ENCODE measurements at regions of chr6 and their contacts with region 1.

Region 1: DNA sequence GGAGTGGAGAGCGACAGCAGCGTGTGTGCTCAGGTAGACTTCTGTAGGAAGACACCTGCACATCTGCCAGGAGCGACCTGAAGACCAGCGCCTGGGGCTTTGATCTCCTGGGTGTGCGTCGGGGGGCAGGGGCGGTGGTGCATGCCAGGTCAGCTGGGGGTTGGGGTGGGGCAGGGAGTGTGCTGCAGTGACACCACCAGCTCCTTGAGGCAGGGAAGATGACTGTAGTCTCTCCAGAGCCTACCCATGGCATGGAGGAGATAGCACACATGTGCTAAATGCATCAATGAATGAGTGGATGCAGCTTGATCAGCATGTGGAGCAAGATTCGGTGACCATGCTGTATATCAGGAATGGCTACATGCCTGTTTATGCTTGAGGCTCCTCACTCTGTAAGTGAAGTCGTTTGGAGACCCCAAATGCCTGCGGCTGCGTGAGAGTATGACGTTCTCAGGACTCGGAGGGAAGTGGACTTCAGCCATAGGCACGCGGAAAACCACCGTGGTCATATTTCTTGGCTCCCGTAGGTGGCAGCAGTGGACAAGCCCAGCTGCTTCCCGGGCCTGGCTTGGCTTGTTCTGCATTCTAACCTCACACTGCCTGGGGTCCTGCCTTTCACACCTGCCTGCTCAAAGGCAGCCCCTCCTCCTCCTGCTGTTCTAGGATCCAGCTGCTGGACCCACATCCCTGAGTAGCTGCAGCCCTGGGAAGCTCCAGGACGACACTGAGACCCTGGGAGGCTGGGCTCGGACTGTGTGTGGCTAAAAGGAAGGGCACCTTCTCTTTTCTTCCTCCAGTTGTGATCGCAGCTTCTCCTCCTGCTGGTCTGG is 39.4 kb upstream of the KCNK16 start:
- DNase-seq: no peak
- ATAC-seq: peak; percentile 95
- H3K4me3 ChIP-seq: no peak overlapping the region
- H3K27ac ChIP-seq: no peak overlapping the region
- H3K4me1 ChIP-seq: no peaks in the 10 kb centered on the region
- H3K27me3 ChIP-seq: no peaks in the 10 kb centered on the region
- CTCF ChIP-seq: peak; percentile 71 to 92 (median 85)
- EP300 ChIP-seq: no peak
- POLR2A ChIP-seq: no peak
- RAD21 ChIP-seq: peak; percentile 81

Region 2: DNA sequence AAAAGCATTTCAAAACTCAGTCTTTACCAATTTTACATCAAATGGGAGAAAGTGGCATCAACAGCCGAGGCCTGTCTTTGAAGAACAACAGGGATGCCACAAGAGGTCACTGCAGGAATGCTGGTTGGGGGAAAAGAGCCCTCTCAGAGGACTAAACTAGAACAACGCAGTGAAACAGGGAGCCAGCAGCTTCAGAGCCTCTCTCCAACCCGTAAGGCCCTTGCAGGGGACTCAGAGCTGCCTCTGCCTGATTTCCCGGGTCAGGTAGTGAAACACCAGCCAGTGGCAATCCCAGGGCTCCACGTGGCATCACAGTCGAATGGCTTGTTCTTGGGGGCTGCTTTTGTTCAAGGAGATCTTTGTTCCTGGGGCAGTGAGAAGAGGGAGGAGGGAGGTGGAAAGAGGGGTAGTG is 15.7 kb after region 1 on chr6:
- CTCF ChIA-PET with region 1: interaction called, 19 read pairs
- POLR2A ChIA-PET with region 1: no interaction called
- RAD21 ChIA-PET with region 1: interaction called, 9 read pairs
- SMC1A ChIA-PET with region 1: interaction called, 6 read pairs
- in situ Hi-C with region 1: no loop called
- intact Hi-C with region 1: no loop called
- DNase-seq: no peak
- ATAC-seq: peak; percentile 95
- H3K4me3 ChIP-seq: no peak overlapping the region
- H3K27ac ChIP-seq: no peak overlapping the region
- H3K4me1 ChIP-seq: no peaks in the 10 kb centered on the region
- H3K27me3 ChIP-seq: no peaks in the 10 kb centered on the region
- CTCF ChIP-seq: peak; percentile 50 to 73 (median 67)
- EP300 ChIP-seq: no peak
- POLR2A ChIP-seq: no peak
- RAD21 ChIP-seq: peak; percentile 75

Region 3: DNA sequence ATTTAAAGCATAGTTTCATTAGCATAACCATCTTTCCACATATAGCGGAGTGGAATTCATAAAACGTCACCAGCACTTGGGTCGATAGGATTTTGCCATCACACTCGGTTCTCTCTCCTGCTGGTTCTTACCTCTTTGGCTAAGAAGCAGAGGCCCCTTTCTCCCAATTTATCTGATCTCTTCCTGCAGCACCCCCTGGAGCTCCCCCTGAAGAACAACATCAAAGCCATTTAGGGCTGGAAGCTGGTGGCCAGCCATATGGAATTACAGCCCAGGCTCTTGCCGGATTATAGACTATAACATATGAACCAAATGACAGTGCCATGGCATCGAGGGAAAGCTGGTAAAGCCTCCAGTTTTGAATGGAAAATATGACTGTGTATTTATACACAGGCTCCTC is 369.7 kb after region 1 on chr6:
- CTCF ChIA-PET with region 1: no interaction called
- POLR2A ChIA-PET with region 1: no interaction called
- RAD21 ChIA-PET with region 1: no interaction called
- SMC1A ChIA-PET with region 1: no interaction called
- in situ Hi-C with region 1: no loop called
- intact Hi-C with region 1: no loop called
- DNase-seq: no peak
- ATAC-seq: no peak
- H3K4me3 ChIP-seq: no peak overlapping the region
- H3K27ac ChIP-seq: no peak overlapping the region
- H3K4me1 ChIP-seq: no peaks in the 10 kb centered on the region
- H3K27me3 ChIP-seq: 0 out of 4 replicates have a peak, but pooled peaks cover 0 to 3% of the 10 kb centered on the region in 2 experiments
- CTCF ChIP-seq: no peak
- EP300 ChIP-seq: no peak
- POLR2A ChIP-seq: no peak
- RAD21 ChIP-seq: no peak

Region 4: DNA sequence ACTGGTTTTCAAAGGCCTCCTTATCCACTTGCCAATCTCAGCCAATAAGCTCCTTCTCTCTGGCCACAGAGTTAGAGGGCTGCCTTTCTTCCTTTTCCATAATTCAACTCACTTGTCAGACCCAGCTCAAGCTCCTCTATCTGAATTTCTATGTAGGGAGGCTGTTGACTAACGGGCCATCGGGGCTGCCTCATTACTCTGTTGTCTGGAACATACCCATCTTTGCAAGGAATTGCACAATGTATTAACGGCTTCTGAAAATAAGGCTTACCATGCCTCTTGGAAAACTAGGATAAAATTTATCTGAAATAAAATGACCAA is 391.8 kb after region 1 on chr6:
- CTCF ChIA-PET with region 1: interaction called, 3 read pairs
- POLR2A ChIA-PET with region 1: no interaction called
- RAD21 ChIA-PET with region 1: no interaction called
- SMC1A ChIA-PET with region 1: interaction called, 4 read pairs
- in situ Hi-C with region 1: no loop called
- intact Hi-C with region 1: loop called (anchors 5 kb)
- DNase-seq: no peak
- ATAC-seq: no peak; the same call in 2 of the 3 replicates
- H3K4me3 ChIP-seq: no peak overlapping the region
- H3K27ac ChIP-seq: no peak overlapping the region
- H3K4me1 ChIP-seq: no peaks in the 10 kb centered on the region
- H3K27me3 ChIP-seq: no peaks in the 10 kb centered on the region
- CTCF ChIP-seq: no peak
- EP300 ChIP-seq: no peak
- POLR2A ChIP-seq: no peak
- RAD21 ChIP-seq: no peak

Region 5: DNA sequence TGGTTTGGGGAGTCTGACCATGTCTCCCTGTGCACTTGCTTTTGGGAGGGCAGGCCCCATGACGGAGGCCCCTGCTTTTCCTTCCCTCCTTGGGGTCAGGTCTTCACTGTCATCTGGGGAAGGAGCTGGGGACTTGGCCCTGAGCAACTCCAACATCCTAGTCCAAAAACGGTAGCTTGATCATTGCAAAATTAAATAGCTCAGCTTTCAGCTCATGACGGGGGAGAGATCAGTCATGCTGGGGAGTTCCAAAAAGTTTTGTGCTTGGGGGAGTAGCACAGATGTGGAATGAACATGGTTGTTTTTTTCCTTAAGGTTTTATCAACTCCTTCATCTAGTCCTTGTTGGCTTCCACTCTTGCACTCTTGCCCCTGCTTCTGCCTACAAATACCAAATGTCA is 511.6 kb after region 1 on chr6:
- CTCF ChIA-PET with region 1: interaction called, 10 read pairs
- POLR2A ChIA-PET with region 1: no interaction called
- RAD21 ChIA-PET with region 1: no interaction called
- SMC1A ChIA-PET with region 1: no interaction called
- in situ Hi-C with region 1: no loop called
- intact Hi-C with region 1: no loop called
- DNase-seq: no peak
- ATAC-seq: no peak
- H3K4me3 ChIP-seq: no peak overlapping the region
- H3K27ac ChIP-seq: no peak overlapping the region
- H3K4me1 ChIP-seq: no peaks in the 10 kb centered on the region
- H3K27me3 ChIP-seq: no peaks in the 10 kb centered on the region; a peak in 1 of 4 replicates
- CTCF ChIP-seq: no peak
- EP300 ChIP-seq: no peak
- POLR2A ChIP-seq: no peak
- RAD21 ChIP-seq: no peak

Region 6: DNA sequence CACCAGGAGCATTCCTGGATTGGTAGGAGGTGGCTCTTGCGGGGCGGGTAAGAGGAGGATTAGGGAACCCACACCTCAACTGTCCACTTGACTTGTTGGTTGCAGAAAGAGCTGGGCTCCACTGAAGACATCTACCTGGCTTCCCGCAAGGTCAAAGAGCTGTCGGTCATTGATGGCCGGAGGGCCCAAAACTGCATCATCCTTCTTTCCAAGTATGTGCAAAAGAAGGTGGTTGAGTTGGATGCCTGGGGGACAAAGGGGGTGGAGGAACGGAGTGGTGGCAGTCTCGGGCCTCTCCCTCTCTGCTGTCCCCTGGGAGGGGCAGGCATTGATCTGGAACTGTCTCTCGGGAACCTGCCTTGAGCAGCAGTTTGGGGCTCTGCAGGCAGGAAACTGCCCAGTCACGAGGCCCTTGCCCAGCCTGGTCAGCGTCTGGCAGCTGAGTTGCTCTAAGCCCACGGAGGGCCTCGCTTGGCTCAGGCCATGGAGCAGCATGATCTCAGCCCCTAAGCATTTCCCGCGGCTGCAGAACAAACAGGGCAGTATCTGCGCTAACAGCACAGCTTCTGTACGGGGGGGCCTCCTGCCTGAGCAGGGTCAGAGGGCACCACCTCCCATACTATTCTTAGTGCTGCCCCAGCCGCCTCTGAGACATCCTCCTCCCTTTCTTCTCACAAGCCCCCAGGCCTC is 525.7 kb after region 1 on chr6:
- CTCF ChIA-PET with region 1: interaction called, 27 read pairs
- POLR2A ChIA-PET with region 1: no interaction called
- RAD21 ChIA-PET with region 1: interaction called, 13 read pairs
- SMC1A ChIA-PET with region 1: interaction called, 9 read pairs
- in situ Hi-C with region 1: loop called (anchors 10 kb)
- intact Hi-C with region 1: loop called (anchors 1 kb)
- DNase-seq: no peak
- ATAC-seq: no peak
- H3K4me3 ChIP-seq: no peak overlapping the region
- H3K27ac ChIP-seq: no peak overlapping the region
- H3K4me1 ChIP-seq: no peaks in the 10 kb centered on the region
- H3K27me3 ChIP-seq: peaks cover 0 to 3% of the 10 kb centered on the region in 2 experiments; a peak in 2 of 4 replicates
- CTCF ChIP-seq: no peak
- EP300 ChIP-seq: no peak
- POLR2A ChIP-seq: no peak
- RAD21 ChIP-seq: no peak

Region 7: DNA sequence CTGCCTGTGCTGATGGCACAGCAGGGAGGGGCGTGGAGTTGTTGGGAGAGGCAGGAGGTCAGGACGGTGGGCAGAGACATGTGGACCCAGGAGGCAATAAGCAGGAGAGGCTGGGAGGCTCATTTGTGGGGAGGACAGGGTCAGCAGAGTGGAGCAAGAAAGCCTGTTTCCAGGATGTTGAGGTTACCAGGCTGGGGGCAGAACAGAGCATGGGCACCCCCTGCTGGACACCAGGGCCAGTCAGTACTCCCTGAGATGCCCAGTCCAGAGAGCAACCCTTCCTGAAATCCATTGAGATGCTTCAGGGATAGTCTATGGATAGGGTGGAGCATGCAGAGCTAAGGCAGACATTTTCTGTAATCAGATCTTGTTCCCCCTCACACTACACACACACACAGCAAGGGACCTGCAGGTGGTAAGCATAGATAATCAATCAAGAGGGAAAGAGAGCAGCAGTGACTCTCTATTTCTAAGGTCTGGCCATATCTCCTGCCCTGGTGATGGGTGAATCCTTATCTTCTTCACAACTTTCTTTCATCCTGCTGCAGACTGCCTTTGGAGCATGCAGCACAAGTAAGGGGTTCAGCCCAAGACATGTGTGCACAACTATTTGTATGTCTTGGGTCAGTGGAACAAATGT is 530.7 kb after region 1 on chr6:
- CTCF ChIA-PET with region 1: interaction called, 27 read pairs
- POLR2A ChIA-PET with region 1: no interaction called
- RAD21 ChIA-PET with region 1: interaction called, 13 read pairs
- SMC1A ChIA-PET with region 1: interaction called, 9 read pairs
- in situ Hi-C with region 1: loop called (anchors 10 kb)
- intact Hi-C with region 1: loop called (anchors 1 kb)
- DNase-seq: peak; percentile 2
- ATAC-seq: peak; percentile 98
- H3K4me3 ChIP-seq: no peak overlapping the region
- H3K27ac ChIP-seq: no peak overlapping the region
- H3K4me1 ChIP-seq: no peaks in the 10 kb centered on the region
- H3K27me3 ChIP-seq: no peaks in the 10 kb centered on the region
- CTCF ChIP-seq: peak; percentile 44 to 73 (median 67); a peak in 5 of 6 replicates
- EP300 ChIP-seq: no peak
- POLR2A ChIP-seq: no peak
- RAD21 ChIP-seq: peak; percentile 49

Region 8: GRCh38 chr6:40308533-40309306 is 946.8 kb after region 1 on chr6:
- CTCF ChIA-PET with region 1: interaction called, 3 read pairs
- POLR2A ChIA-PET with region 1: no interaction called
- RAD21 ChIA-PET with region 1: interaction called, 4 read pairs
- SMC1A ChIA-PET with region 1: no interaction called
- in situ Hi-C with region 1: loop called (anchors 5 kb)
- intact Hi-C with region 1: loop called (anchors 5 kb)
- DNase-seq: peak; percentile 11
- ATAC-seq: peak; percentile 94
- H3K4me3 ChIP-seq: no peak overlapping the region
- H3K27ac ChIP-seq: no peak overlapping the region
- H3K4me1 ChIP-seq: no peaks in the 10 kb centered on the region
- H3K27me3 ChIP-seq: peaks cover 3 to 9% of the 10 kb centered on the region in 2 experiments; a peak in 3 of 4 replicates
- CTCF ChIP-seq: peak; percentile 84 to 91 (median 89)
- EP300 ChIP-seq: no peak
- POLR2A ChIP-seq: no peak
- RAD21 ChIP-seq: peak; percentile 73